ENCODE measurements at regions of chr6 and their contacts with region 1.

Region 1: GRCh38 chr6:16128759-16129622 is at the start of gene MYLIP:
- DNase-seq: peak; percentile 98
- CTCF ChIP-seq: peak; percentile 95

Region 2: GRCh38 chr6:15901141-15902115 is 227.6 kb before region 1 on chr6:
- CTCF ChIA-PET with region 1: interaction called, 5 read pairs
- POLR2A ChIA-PET with region 1: interaction called, 14 read pairs
- DNase-seq: peak; percentile 76
- CTCF ChIP-seq: no peak

Region 3: GRCh38 chr6:16031278-16031981 is 97.6 kb before region 1 on chr6:
- CTCF ChIA-PET with region 1: no interaction called
- POLR2A ChIA-PET with region 1: no interaction called
- DNase-seq: no peak
- CTCF ChIP-seq: no peak

Region 4: DNA sequence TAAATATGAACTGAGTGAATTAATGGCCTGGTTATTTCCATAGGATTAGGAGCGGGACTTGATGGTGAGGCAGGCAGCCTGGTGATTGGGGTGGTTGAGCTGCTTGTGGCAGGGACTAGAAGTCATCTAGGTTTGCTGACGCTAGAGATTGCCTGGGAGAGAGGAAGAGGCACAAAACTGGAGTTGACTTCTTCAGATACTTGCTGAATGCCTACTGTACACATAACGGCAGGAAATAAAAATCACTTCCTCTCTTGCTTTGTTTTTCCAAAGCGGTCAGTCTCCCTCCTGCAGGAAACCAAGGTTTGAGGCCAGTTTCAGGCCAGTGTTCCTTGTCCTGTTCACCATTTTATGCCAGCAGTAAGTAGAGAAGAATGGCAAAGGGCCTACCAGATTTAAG is 36.9 kb before region 1 on chr6:
- CTCF ChIA-PET with region 1: interaction called, 12 read pairs
- POLR2A ChIA-PET with region 1: interaction called, 6 read pairs
- DNase-seq: no peak
- CTCF ChIP-seq: no peak